ENCODE measurements at regions of chr2 and their contacts with region 1.

Region 1: DNA sequence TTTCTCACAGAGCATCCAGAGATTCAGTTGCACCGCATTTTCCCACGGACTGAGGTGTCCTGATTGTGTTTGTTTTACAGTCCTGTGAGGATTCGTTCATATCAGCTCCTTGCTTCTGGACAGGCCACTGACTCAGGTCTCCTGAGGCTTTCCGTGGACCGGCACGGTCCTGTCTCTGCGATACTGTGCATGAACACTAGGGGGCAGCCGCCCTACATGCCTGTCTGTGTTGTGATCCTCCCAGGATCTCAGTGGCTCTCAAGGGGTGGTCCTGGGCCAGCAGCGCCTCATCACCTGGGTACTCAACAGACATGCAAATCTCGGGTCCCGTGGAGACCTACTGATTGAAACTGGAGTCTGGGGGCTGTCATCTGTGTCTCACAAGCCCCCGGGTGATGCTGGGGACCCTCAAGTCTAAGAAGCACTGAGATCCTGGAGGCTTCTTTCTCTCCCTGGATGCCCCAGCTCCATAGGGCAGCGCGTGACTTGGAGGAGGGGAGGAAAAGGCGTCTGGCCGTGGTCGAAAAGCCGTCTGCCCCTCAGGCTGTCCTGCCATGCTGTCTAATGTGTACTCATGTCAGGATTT is 28.9 kb downstream of the IL1R2 start:
- DNase-seq: no peak
- H3K4me3 ChIP-seq: no peak overlapping the region
- CTCF ChIP-seq: peak; percentile 98

Region 2: GRCh38 chr2:102033031-102033749 is 12.5 kb after region 1 on chr2:
- CTCF ChIA-PET with region 1: interaction called, 32 read pairs
- POLR2A ChIA-PET with region 1: interaction called, 5 read pairs
- DNase-seq: no peak
- H3K4me3 ChIP-seq: no peak overlapping the region
- CTCF ChIP-seq: no peak

Region 3: GRCh38 chr2:102063941-102064678 is 43.4 kb after region 1 on chr2:
- CTCF ChIA-PET with region 1: interaction called, 10 read pairs
- POLR2A ChIA-PET with region 1: no interaction called
- DNase-seq: peak; percentile 95
- H3K4me3 ChIP-seq: peak overlapping the region; percentile 38
- CTCF ChIP-seq: no peak

Region 4: DNA sequence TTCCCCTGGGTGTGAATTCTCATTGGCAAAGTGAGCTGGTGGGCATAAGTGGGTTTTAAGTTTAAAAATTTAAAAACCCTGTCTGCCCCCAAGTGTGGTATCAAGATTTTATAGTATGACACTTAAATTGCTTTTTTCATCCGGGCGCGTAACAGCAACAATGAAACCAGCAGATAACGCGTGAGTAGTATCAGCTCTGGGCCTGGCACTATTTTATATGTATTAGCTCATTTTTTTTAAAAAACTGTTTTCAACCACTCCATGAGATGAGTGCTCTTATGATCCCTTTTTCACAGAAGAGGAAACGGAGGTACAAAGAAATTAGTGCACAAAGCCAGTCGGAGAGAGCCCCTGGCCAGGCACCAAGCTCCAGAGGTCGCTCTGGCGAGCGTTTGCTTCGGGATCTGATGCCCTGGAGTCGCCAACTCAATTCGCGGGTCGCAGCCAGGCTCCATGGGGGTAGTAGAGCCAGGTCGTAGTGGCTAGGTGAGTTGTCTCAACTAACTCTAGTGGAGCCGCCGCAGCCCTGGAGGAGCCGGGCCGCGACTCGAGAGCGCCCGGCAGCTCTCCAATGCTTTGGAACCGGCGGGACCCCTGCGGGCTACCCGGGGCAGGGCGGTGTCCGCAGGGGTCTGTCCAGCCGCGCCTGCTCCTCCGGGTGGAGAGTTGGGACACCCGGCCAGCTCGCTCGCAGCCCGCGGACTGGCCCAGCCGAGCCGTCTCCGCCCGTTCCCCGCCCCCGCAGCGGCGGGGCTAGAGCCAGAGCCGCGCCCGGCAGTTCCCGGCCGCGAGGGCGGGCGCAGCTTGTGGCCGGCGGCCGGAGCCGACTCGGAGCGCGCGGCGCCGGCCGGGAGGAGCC is 121.5 kb after region 1 on chr2 and contains the start of gene IL1R1:
- CTCF ChIA-PET with region 1: interaction called, 40 read pairs
- POLR2A ChIA-PET with region 1: interaction called, 3 read pairs
- DNase-seq: no peak
- H3K4me3 ChIP-seq: peak within 1 kb of the TSS; percentile 69
- CTCF ChIP-seq: no peak

Region 5: GRCh38 chr2:102166189-102166845 is 145.6 kb after region 1 on chr2:
- CTCF ChIA-PET with region 1: interaction called, 298 read pairs
- POLR2A ChIA-PET with region 1: interaction called, 5 read pairs
- DNase-seq: peak; percentile 42
- H3K4me3 ChIP-seq: no peak overlapping the region
- CTCF ChIP-seq: peak; percentile 56

Region 6: DNA sequence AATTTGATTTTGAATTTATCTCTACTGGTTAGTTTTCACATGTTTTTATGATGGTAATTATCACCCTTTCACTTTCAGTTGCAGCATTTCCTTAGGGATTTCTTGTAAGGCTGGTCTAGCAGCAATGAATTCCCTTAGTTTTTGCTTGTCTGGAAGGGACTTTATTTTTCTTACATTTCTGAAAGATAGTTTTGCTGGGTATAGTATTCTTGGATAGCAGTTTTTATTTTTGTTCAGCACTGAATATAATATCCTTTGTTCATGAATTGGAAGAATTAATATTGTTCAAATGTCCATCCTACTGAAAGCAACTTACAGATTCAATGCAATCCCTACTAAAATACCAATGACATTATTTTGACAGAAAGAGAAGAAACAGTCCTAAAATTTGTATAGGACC is 196.3 kb after region 1 on chr2:
- CTCF ChIA-PET with region 1: interaction called, 10 read pairs
- POLR2A ChIA-PET with region 1: no interaction called
- DNase-seq: no peak
- H3K4me3 ChIP-seq: no peak overlapping the region
- CTCF ChIP-seq: no peak